ENCODE measurements at regions of chr3 and their contacts with region 1.

Region 1: GRCh38 chr3:141231101-141231935 is at the start of gene PXYLP1:
- DNase-seq: peak; percentile 41 to 94
- H3K4me3 ChIP-seq: peak within 1 kb of the TSS; percentile 65 to 78 (median 68)
- H3K27ac ChIP-seq: no peak within 1 kb of the TSS; the same call in 1 of the 2 replicates
- H3K4me1 ChIP-seq: peaks cover 4 to 12% (median 6%) of the 10 kb centered on the region in 4 experiments; a peak in 5 of 7 replicates
- H3K27me3 ChIP-seq: peaks cover 0 to 21% (median 15%) of the 10 kb centered on the region in 4 experiments; a peak in 4 of 7 replicates
- CTCF ChIP-seq: peak; percentile 68 to 86 (median 76)
- EP300 ChIP-seq: no peak
- POLR2A ChIP-seq: peak in 1 of 2 experiments; percentile 67; a peak in 1 of 3 replicates
- RAD21 ChIP-seq: peak; percentile 12 to 62; a peak in 3 of 4 replicates
- total RNA-seq, gene PXYLP1: 17.6 and 19.4 TPM in 2 replicates

Region 2: GRCh38 chr3:141105828-141106628 is 125.3 kb before region 1 on chr3:
- CTCF ChIA-PET with region 1: no interaction called
- POLR2A ChIA-PET with region 1: no interaction called
- DNase-seq: peak in 1 of 2 experiments; percentile 70
- H3K4me3 ChIP-seq: no peak overlapping the region
- H3K27ac ChIP-seq: no peak overlapping the region
- H3K4me1 ChIP-seq: peaks cover 0 to 5% (median 4%) of the 10 kb centered on the region in 4 experiments; a peak in 5 of 7 replicates
- H3K27me3 ChIP-seq: no peaks in the 10 kb centered on the region
- CTCF ChIP-seq: peak in 2 of 3 experiments; percentile 76 to 83; a peak in 3 of 4 replicates
- EP300 ChIP-seq: no peak
- POLR2A ChIP-seq: no peak
- RAD21 ChIP-seq: peak; percentile 73 to 82

Region 3: DNA sequence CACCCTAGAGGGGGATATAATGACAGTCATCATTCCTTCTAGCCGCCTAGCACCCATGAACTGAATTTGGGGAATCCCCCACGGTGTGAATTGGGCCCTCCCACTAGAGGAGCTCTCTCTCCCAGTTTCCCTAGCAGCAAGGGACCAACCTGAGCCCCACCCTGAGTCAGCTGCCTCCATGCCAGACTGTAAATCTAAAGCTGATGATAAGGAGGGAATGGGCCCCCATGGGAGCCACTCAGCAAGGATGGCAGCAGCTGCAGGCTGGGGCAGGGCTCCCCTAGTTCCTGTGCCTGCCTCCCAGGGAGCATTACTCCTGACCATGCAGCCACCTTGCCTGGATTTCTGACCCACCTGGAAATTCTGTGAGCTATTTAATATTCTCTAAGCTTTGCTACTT is 56.6 kb before region 1 on chr3:
- CTCF ChIA-PET with region 1: no interaction called
- POLR2A ChIA-PET with region 1: no interaction called
- DNase-seq: no peak
- H3K4me3 ChIP-seq: no peak overlapping the region
- H3K27ac ChIP-seq: no peak overlapping the region
- H3K4me1 ChIP-seq: peaks cover 0 to 6% (median 2%) of the 10 kb centered on the region in 4 experiments; a peak in 4 of 7 replicates
- H3K27me3 ChIP-seq: no peaks in the 10 kb centered on the region
- CTCF ChIP-seq: no peak
- EP300 ChIP-seq: no peak
- POLR2A ChIP-seq: no peak
- RAD21 ChIP-seq: no peak

Region 4: GRCh38 chr3:141243271-141243707 is 12.0 kb after region 1 on chr3:
- CTCF ChIA-PET with region 1: interaction called, 16 read pairs
- POLR2A ChIA-PET with region 1: interaction called, 5 read pairs
- DNase-seq: peak in 1 of 2 experiments; percentile 39
- H3K4me3 ChIP-seq: no peak overlapping the region
- H3K27ac ChIP-seq: no peak overlapping the region
- H3K4me1 ChIP-seq: peaks cover 7 to 21% (median 18%) of the 10 kb centered on the region in 4 experiments
- H3K27me3 ChIP-seq: no peaks in the 10 kb centered on the region
- CTCF ChIP-seq: no peak
- EP300 ChIP-seq: no peak
- POLR2A ChIP-seq: no peak
- RAD21 ChIP-seq: no peak

Region 5: DNA sequence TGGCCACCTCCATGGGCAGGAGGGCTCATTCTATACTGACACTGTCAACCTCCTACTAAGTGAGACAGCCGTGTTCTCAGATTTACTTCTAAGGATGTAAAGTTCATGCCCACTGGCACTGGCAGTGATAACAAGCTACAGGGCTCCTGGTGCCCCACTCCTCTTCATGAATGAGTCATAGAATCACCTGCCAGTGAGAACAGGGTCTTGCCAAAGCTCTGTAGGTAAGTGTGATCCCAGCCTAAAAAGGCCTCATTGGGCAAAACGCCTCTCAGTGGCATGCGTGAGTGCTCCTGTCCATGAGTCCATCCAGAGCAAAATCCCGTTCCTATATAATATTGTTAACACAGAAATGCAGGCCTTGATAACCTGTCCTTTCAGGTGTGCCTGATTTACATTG is 17.7 kb after region 1 on chr3:
- CTCF ChIA-PET with region 1: interaction called, 80 read pairs
- POLR2A ChIA-PET with region 1: interaction called, 3 read pairs
- DNase-seq: peak in 1 of 2 experiments; percentile 35
- H3K4me3 ChIP-seq: no peak overlapping the region
- H3K27ac ChIP-seq: no peak overlapping the region
- H3K4me1 ChIP-seq: no peaks in the 10 kb centered on the region
- H3K27me3 ChIP-seq: no peaks in the 10 kb centered on the region
- CTCF ChIP-seq: no peak
- EP300 ChIP-seq: no peak
- POLR2A ChIP-seq: no peak
- RAD21 ChIP-seq: no peak

Region 6: DNA sequence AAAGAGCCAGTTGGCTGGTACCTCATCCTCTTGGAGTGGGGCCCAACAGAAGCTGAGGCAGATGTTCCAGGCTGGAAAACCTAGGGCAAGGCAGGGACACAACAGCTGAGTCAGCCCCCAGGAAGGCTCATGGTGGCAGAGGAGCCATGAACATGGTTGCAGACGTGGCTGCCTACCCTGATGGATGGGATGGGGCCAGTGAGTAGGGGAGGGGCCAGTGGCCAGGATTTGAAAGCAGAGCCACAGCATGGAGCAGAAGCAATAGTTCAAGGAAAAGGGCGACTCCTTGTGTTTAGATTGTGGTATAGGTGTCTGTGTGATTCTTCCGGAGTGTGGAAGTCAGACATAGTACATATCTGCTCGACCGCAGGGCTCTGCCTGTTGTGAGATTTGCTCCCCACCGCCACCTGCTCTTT is 24.5 kb after region 1 on chr3:
- CTCF ChIA-PET with region 1: interaction called, 80 read pairs
- POLR2A ChIA-PET with region 1: interaction called, 12 read pairs
- DNase-seq: peak in 1 of 2 experiments; percentile 54
- H3K4me3 ChIP-seq: no peak overlapping the region
- H3K27ac ChIP-seq: no peak overlapping the region
- H3K4me1 ChIP-seq: peaks cover 0 to 5% (median 0%) of the 10 kb centered on the region in 4 experiments; a peak in 3 of 7 replicates
- H3K27me3 ChIP-seq: no peaks in the 10 kb centered on the region
- CTCF ChIP-seq: peak in 2 of 3 experiments; percentile 47 to 78; a peak in 3 of 4 replicates
- EP300 ChIP-seq: no peak
- POLR2A ChIP-seq: no peak
- RAD21 ChIP-seq: peak; percentile 65 to 73

Region 7: GRCh38 chr3:141279077-141279967 is 48.0 kb after region 1 on chr3:
- CTCF ChIA-PET with region 1: interaction called, 20 read pairs
- POLR2A ChIA-PET with region 1: no interaction called
- DNase-seq: no peak
- H3K4me3 ChIP-seq: no peak overlapping the region
- H3K27ac ChIP-seq: no peak overlapping the region
- H3K4me1 ChIP-seq: no peaks in the 10 kb centered on the region
- H3K27me3 ChIP-seq: no peaks in the 10 kb centered on the region
- CTCF ChIP-seq: peak in 2 of 3 experiments; percentile 52 to 60; a peak in 3 of 4 replicates
- EP300 ChIP-seq: no peak
- POLR2A ChIP-seq: no peak
- RAD21 ChIP-seq: peak; percentile 58 to 63

Region 8: DNA sequence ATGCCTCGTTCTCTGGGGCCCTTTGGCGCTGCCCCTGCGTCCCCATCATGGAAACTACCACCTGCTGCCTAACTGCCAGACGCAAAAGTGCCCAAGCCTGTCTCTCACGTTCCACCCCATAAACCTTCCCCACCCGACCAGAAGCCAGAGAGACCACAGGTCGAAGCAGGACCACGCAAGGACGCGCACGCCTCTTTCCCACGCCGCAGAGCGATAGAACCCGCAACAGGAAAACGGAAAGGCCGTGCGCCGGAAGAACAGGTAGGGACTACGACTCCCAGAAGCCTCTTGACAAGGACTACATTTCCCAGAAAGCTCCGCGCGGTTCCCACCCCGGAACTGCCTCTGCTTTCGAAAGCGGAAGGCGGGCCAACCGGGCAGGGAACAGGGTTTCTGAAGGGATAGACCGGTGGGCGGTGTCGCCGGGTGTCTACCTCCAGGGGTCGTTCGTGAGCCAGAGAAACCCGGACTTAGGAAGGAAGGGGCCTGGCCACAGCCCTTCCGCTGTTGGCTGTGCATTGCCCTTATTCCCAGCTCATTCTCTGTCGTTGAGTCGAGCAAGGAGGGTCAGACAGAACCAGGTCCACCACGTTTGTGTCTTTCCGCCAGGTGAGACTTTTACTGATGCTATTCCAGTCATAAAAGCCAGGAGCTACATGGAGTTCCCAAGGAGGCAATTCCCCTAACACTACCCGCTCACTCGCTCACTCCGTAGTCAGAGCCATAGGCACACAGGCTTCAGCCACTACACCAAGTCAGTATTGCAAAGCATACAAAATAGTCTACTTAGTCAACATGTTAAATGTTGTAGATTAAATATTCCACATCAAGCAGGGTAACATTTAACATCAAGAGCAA is 80.4 kb after region 1 on chr3:
- CTCF ChIA-PET with region 1: interaction called, 24 read pairs
- POLR2A ChIA-PET with region 1: no interaction called
- DNase-seq: peak; percentile 94 to 98
- H3K4me3 ChIP-seq: peak overlapping the region; percentile 69 to 99 (median 85)
- H3K27ac ChIP-seq: no peak overlapping the region
- H3K4me1 ChIP-seq: peaks cover 0 to 4% (median 2%) of the 10 kb centered on the region in 4 experiments; a peak in 4 of 7 replicates
- H3K27me3 ChIP-seq: peaks cover 0 to 7% (median 3%) of the 10 kb centered on the region in 4 experiments; a peak in 1 of 7 replicates
- CTCF ChIP-seq: peak; percentile 74 to 91 (median 84)
- EP300 ChIP-seq: no peak
- POLR2A ChIP-seq: peak; percentile 34 to 73
- RAD21 ChIP-seq: peak; percentile 89

Measured in H1 (cell line).